Lower leg skin (tissue), 4 donors: ENCODE measurements at regions of chr12 and their contacts with region 1.

Region 1: GRCh38 chr12:127108360-127109215 is 1158.4 kb upstream of the TMEM132C start:
- DNase-seq: peak in 1 of 2 donors; percentile 29
- H3K4me3 ChIP-seq: no peak overlapping the region
- CTCF ChIP-seq: no peak
- POLR2A ChIP-seq: no peak

Region 2: DNA sequence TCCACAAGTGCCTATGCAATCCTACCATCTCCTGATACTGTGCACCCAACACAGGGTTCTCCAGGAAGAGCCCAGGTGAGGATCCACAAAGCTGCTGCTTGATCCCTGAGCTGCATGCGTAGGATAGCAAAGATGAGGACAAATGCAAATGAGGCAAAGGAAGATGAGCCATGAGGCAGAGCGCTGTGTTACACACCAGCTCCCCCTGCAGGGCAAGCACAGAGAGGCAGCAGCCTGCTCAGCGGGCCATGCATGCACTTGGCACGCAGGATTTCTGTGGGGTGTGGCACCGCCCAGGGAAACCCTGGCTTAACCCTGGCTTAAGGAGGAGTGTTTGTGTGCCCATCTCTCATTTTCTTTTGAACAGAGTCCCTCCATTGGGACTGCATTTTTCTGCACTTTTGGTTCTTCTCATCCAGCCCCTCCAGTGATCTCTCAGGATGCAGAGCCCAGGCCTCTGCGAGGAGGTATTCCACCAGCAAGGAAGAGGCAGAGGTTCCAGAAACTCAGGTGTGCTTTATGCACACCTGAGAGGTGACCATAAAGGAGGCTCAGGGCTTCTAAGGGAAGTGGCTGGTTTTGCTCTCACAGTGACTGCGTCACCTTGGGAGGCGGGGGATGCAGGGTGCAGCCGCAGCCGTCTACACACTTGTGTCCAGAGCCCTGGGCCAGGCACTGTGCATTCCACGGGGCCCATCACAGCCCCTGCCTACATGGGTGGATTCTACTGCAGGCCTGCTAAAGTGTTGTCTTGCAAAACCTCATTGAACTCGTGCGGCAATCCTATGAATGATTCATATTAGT is 185.1 kb after region 1 on chr12:
- intact Hi-C with region 1: loop called (anchors 10 kb)
- DNase-seq: peak; percentile 21 to 87
- H3K4me3 ChIP-seq: no peak overlapping the region
- CTCF ChIP-seq: no peak
- POLR2A ChIP-seq: no peak